MCF 10A (cell line): ENCODE measurements at regions of chr1 and their contacts with region 1.

Region 1: DNA sequence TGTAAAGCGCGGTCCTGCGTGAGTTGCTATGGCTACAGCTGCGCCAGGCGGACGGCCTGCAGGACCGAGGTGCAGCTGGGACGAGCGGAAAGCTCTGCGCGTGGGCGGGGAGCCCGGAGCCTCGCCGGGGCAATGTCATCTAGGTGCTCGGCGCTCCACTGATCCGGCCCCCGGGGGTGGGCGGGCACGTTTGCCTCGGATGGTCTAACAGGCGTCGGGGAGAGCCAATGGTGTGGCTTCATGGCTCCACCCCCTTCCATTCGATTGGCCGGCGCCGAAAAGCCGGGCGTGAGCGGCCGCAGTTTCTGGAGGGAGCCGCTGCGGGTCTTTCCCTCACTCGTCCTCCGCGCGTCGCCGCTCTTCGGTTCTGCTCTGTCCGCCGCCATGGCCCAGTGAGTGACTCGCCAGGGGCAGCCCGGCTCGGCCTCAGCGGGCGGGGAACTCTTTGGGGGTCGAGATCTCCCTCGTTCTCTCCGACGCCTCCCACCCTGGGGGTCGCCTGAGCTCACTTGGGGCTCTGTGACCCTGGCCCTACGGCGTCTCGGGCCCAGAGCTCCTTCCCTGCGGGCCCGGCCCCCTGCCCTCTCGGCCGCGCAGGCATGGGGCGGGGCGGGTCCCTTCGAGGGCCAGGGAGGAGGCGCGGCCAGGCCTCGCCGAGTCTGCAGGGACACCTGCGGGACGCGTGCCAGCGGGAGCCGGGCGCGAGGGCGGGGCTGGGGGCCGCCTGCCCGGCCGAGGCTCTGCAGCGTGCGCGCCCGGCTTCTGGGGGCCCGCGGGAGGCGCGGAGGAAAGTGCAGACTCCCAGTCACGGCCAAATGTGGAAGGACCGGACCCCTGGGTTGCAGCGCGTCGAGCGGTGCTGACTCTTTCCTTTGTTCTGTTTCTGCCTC is at the start of gene PGD:
- DNase-seq: peak; percentile 99
- H3K4me3 Mint-ChIP-seq: peak within 1 kb of the TSS; percentile 93
- H3K27ac Mint-ChIP-seq: peak within 1 kb of the TSS; percentile 44
- H3K4me1 Mint-ChIP-seq: peaks cover 10% of the 10 kb centered on the region
- H3K27me3 Mint-ChIP-seq: no peaks in the 10 kb centered on the region
- CTCF ChIP-seq: no peak
- total RNA-seq, gene PGD: 56.4 and 70.6 TPM in 2 replicates

Region 2: DNA sequence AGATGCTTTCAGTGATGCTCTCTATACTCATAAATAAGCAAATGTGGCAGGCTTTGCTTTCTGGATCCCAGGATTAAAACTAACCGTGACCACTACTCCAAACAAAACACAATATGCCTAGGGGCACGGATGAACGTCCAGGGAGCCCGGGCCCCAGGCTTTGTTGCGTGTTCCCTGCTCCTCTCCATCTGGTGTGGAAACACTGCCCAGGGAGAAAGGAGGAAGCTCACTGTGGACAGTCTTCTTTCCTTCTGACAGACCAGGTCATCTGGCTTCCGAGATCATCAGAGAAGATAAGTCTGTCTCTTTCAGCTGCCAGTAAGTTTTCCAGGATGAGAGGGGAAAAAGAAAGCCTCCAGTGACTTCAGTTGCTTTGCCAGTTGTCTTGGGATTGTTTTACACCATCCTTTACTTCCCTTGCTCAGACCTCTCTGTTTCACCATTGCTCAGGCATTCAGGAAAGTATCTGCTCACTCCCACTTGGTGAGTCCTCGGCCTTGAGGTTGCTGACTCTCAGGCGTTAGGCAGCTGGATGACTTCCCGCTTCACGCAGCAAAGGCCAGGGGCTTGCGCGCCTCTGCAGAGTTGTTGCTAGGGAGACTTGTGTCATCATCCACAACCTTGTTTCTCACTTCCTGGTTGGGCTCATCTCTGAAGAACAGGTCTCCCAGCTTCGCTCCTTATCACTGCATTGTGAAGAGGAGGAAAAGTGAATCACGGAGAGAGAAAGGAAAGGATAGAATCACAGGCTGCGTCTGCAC is 20.7 kb before region 1 on chr1:
- CTCF ChIA-PET with region 1: interaction called, 25 read pairs
- POLR2A ChIA-PET with region 1: interaction called, 14 read pairs
- intact Hi-C with region 1: no loop called
- DNase-seq: no peak
- H3K4me3 Mint-ChIP-seq: no peak overlapping the region
- H3K27ac Mint-ChIP-seq: no peak overlapping the region
- H3K4me1 Mint-ChIP-seq: peaks cover 5% of the 10 kb centered on the region
- H3K27me3 Mint-ChIP-seq: no peaks in the 10 kb centered on the region
- CTCF ChIP-seq: no peak

Region 3: DNA sequence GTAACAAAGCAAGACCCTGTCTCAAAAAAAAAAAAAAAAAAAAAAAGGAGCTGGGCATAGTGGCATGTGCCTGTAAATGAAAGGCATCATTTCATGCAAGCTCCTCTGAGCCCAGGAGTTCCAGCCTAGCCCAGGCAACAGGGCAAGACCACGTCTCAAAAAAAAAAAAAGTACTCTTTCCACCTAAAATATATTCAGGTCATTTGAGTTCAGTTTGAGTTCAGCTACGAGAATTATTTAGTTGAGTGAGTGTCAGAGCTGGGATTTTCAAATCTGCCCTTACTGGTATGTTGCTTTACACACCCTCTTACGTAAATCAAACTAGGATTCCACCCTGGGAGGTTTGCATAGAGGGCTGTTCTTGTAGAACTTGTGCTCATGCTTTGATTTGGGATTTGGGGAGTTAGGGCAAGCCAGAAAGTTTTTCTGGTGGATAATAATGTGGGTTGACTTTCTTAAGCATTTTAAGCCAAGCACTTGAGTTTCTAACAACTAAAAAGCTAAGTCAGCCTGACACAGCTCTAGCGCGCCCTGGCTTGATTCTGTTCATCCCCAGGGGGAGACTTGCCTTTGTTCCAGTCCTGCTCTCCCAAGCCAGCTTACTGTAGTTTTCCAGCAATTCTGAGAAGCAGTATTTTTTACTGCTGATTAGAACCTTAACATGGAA is 11.4 kb before region 1 on chr1:
- CTCF ChIA-PET with region 1: interaction called, 6 read pairs
- POLR2A ChIA-PET with region 1: interaction called, 85 read pairs
- intact Hi-C with region 1: loop called (anchors 1 kb)
- DNase-seq: peak; percentile 42
- H3K4me3 Mint-ChIP-seq: peak overlapping the region; percentile 12
- H3K27ac Mint-ChIP-seq: peak overlapping the region; percentile 75
- H3K4me1 Mint-ChIP-seq: peaks cover 6% of the 10 kb centered on the region
- H3K27me3 Mint-ChIP-seq: no peaks in the 10 kb centered on the region
- CTCF ChIP-seq: no peak

Region 4: DNA sequence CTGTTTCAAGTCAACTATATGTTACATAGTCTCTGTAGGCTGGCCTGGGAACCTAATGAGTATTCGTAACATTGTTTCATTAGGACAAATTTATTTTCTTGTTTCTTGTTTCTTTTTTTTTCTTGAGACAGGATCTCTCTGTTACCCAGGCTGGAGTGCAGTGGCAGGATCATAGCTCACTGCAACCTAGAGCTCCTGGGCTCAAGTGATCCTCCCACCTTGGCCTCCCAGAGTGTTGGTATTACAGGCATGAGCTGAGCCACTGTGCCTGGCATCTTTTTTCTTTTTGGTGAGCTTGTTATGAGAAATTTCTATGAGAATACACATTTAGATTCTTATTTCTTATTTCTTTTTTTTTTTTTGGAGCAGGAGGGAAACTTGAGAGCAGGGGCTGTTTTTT is 38.1 kb after region 1 on chr1:
- CTCF ChIA-PET with region 1: no interaction called
- POLR2A ChIA-PET with region 1: no interaction called
- intact Hi-C with region 1: no loop called
- DNase-seq: no peak
- H3K4me3 Mint-ChIP-seq: no peak overlapping the region
- H3K27ac Mint-ChIP-seq: no peak overlapping the region
- H3K4me1 Mint-ChIP-seq: peaks cover 4% of the 10 kb centered on the region
- H3K27me3 Mint-ChIP-seq: no peaks in the 10 kb centered on the region
- CTCF ChIP-seq: no peak